Astrocyte of the cerebellum (primary cell): ENCODE measurements at regions of chrX and their contacts with region 1.

Region 1: GRCh38 chrX:151985955-151986354 is 11.5 kb upstream of the GABRE start:
- DNase-seq: no peak
- H3K4me3 ChIP-seq: no peak overlapping the region
- CTCF ChIP-seq: no peak

Region 2: GRCh38 chrX:152025656-152026440 is 39.9 kb after region 1 on chrX:
- in situ Hi-C with region 1: no loop called
- DNase-seq: peak; percentile 1
- H3K4me3 ChIP-seq: no peak overlapping the region
- CTCF ChIP-seq: no peak

Region 3: GRCh38 chrX:152072236-152072635 is 86.3 kb after region 1 on chrX:
- in situ Hi-C with region 1: loop called (anchors 5 kb)
- DNase-seq: peak; percentile 84
- H3K4me3 ChIP-seq: no peak overlapping the region
- CTCF ChIP-seq: no peak